Activated CD8-positive, alpha-beta T cell treated with anti-CD3 and anti-CD28 coated beads, Interleukin-2, amount 10 ng/mL, durations not matched to agents 7 days and 5 days (primary cell): ENCODE measurements at regions of chr20 and their contacts with region 1.

Region 1: DNA sequence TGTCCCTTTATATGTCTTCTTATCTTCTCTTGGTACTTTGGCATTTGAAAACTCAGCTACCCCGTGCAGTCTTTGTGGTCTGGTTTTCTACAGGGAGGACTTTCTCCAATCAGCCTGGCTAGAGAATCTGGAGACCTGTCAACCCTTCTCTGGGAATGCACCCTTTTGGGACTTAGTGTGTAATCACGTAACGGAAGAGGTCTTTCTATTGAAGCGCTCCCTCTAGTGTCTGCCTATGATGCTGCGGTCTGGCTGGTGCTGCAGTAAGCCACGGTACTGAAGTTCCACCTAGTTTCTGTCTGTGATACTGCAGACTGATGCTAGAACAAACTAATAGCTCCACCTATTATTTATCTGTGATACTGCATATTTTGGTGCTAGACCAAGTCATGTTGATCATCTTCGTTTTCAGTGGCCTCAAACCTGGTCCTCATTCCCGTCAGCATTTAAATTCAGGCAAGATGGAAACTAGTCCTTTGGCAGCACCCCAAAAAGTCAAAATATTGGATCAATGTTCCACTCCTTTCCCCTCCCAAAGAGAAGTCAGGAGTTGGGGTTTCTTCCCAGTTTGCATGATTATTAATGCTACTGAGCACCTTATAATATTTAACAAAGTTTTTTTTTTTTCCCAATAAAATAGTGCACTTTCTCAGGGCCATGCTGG is 12.5 kb upstream of the SIRPB2 start:
- DNase-seq: peak; percentile 87
- ATAC-seq: peak; percentile 100
- H3K4me3 Mint-ChIP-seq: no peak overlapping the region
- H3K27ac Mint-ChIP-seq: no peak overlapping the region
- H3K4me1 Mint-ChIP-seq: peaks cover 3% of the 10 kb centered on the region
- H3K27me3 Mint-ChIP-seq: peaks cover 49% of the 10 kb centered on the region

Region 2: DNA sequence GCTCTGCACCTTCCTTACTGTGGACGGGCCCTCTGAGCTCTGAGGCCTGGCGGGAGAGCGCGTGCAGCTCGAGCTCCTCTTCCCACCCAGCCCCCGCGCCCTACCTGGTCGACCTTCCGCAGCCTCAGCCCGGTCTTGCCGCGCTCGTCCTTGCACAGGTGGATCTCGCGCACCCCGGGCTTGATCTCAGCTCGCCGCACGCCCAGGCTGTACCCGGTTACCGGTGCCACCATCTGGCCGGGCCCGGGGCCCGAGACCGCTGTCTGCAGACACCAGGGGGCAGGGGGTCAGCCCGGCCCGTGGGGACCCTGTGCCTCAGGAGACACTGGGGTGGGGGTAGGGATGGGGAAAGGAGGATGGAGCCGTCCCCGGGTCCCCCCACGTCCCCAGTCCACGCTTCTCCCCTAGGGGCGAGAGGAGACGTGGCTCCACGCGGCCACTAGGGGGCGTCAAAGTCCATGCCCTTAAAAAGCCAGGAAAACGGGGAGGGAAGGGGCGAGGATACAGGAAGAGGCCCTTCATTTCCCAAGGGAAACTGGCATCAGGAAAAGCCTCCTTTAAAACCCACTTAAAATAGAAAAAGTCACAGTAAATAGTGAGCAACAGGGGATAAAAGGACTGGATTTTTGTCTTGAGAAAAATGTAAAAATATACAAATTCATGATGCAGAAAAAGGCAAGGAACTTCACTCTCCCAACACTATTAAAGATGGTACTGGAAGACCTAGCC is 190.3 kb before region 1 on chr20:
- CTCF ChIA-PET with region 1: interaction called, 12 read pairs
- POLR2A ChIA-PET with region 1: no interaction called
- DNase-seq: peak; percentile 66
- ATAC-seq: peak; percentile 62
- H3K4me3 Mint-ChIP-seq: no peak overlapping the region
- H3K27ac Mint-ChIP-seq: no peak overlapping the region
- H3K4me1 Mint-ChIP-seq: peaks cover 18% of the 10 kb centered on the region
- H3K27me3 Mint-ChIP-seq: peaks cover 6% of the 10 kb centered on the region

Region 3: GRCh38 chr20:1414982-1415381 is 88.7 kb before region 1 on chr20:
- CTCF ChIA-PET with region 1: no interaction called
- POLR2A ChIA-PET with region 1: no interaction called
- DNase-seq: no peak
- ATAC-seq: no peak
- H3K4me3 Mint-ChIP-seq: no peak overlapping the region
- H3K27ac Mint-ChIP-seq: no peak overlapping the region
- H3K4me1 Mint-ChIP-seq: peaks cover 11% of the 10 kb centered on the region
- H3K27me3 Mint-ChIP-seq: peaks cover 26% of the 10 kb centered on the region

Region 4: GRCh38 chr20:1450926-1451491 is 52.7 kb before region 1 on chr20:
- CTCF ChIA-PET with region 1: interaction called, 11 read pairs
- POLR2A ChIA-PET with region 1: no interaction called
- DNase-seq: no peak
- ATAC-seq: no peak
- H3K4me3 Mint-ChIP-seq: no peak overlapping the region
- H3K27ac Mint-ChIP-seq: no peak overlapping the region
- H3K4me1 Mint-ChIP-seq: no peaks in the 10 kb centered on the region
- H3K27me3 Mint-ChIP-seq: no peaks in the 10 kb centered on the region

Region 5: DNA sequence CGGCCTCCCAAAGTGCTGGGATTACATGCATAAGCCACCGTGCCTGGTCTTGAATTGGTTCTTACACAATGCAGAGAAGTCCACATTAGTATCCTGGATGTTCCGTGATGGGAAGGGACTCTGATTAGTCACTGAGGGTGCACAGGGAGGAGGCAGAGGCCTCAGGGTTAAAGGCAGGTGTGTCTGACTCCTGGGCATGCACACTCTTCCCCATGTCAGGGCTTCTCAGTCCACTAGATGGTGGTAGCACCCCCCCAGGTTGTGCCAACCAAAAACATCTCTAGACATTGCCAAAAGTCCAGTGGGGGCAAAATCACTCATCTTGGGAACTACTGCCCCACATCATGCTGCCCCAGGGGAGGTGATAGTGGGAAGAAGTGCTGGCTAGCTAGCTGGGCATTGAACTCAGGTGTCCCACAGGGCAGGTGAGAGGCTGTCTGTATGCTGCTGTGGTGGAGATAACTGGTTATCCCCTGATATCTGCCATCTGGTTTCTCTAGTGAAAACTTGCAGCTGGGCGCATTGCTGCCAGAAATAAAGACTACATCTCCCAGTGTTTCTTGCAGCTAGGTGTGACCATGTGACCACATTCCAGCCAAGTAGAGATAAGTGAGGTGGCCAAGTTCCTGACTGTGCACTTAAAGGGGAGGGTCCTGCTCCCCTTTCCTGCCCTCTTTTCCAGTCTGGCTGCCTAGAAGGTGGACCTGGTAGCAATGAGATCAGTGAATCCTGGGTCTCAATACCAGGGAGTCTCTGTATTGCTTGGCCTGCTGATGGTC is 28.7 kb before region 1 on chr20:
- CTCF ChIA-PET with region 1: interaction called, 33 read pairs
- POLR2A ChIA-PET with region 1: no interaction called
- DNase-seq: peak; percentile 28
- ATAC-seq: peak; percentile 44
- H3K4me3 Mint-ChIP-seq: no peak overlapping the region
- H3K27ac Mint-ChIP-seq: no peak overlapping the region
- H3K4me1 Mint-ChIP-seq: no peaks in the 10 kb centered on the region
- H3K27me3 Mint-ChIP-seq: peaks cover 5% of the 10 kb centered on the region

Region 6: GRCh38 chr20:1524004-1524403 is 20.3 kb after region 1 on chr20:
- CTCF ChIA-PET with region 1: interaction called, 14 read pairs
- POLR2A ChIA-PET with region 1: no interaction called
- DNase-seq: no peak
- ATAC-seq: no peak
- H3K4me3 Mint-ChIP-seq: no peak overlapping the region
- H3K27ac Mint-ChIP-seq: no peak overlapping the region
- H3K4me1 Mint-ChIP-seq: no peaks in the 10 kb centered on the region
- H3K27me3 Mint-ChIP-seq: peaks cover 21% of the 10 kb centered on the region

Region 7: GRCh38 chr20:1741309-1742048 is 237.8 kb after region 1 on chr20:
- CTCF ChIA-PET with region 1: interaction called, 13 read pairs
- POLR2A ChIA-PET with region 1: no interaction called
- DNase-seq: no peak
- ATAC-seq: no peak
- H3K4me3 Mint-ChIP-seq: no peak overlapping the region
- H3K27ac Mint-ChIP-seq: no peak overlapping the region
- H3K4me1 Mint-ChIP-seq: peaks cover 3% of the 10 kb centered on the region
- H3K27me3 Mint-ChIP-seq: peaks cover 9% of the 10 kb centered on the region

Region 8: GRCh38 chr20:2162125-2162822 is 658.6 kb after region 1 on chr20:
- CTCF ChIA-PET with region 1: no interaction called
- POLR2A ChIA-PET with region 1: no interaction called
- DNase-seq: no peak
- ATAC-seq: no peak
- H3K4me3 Mint-ChIP-seq: no peak overlapping the region
- H3K27ac Mint-ChIP-seq: no peak overlapping the region
- H3K4me1 Mint-ChIP-seq: no peaks in the 10 kb centered on the region
- H3K27me3 Mint-ChIP-seq: peaks cover 3% of the 10 kb centered on the region